ENCODE measurements at regions of chr2 and their contacts with region 1.

Region 1: DNA sequence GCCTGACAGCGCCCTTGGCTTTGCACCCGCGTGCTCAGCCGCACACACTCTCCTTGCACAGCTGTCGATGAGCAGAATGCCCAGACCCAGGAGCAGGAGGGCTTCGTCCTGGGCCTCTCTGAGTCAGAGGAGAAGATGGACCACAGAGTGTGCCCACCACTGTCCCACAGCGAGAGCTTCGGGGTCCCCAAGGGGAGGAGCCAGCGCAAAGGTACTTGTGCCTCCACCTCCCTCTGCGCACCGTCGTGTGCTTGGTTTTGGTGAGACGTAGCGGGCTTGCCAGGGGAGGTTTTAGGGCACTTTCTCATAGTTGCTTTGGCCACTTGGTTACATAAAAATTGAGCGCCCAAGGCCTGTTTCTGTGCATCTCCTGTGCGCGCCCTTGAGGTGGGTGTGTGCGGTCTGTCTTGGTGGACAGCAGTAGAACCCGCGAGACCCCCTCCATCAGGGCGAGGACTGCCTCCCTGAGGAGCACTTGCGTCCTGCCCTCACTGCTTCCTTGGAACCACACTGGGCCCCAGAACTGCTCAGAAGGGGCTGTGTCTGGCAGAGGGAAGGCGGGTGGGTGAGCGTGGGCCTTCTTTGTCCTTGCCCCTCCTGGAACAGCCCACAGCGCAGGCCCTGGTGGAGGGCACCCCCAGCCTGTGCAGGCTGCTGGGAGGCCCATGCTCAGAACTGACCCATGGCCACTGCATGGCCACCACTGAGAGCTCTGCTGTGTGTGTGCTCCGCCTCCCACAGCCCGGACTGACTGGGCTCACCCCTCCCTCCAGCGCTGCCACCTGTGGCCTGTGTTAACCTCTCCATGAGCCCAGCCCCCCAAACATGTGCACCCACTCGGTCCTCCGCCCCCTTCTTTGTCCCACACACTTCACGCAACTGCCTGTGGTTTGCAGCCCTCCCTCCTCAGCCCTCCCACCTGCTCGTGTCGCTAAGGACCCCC is 95.9 kb downstream of the DGKD start:
- DNase-seq: no peak
- H3K4me3 ChIP-seq: no peak overlapping the region
- H3K27ac ChIP-seq: no peak overlapping the region
- H3K4me1 ChIP-seq: no peaks in the 10 kb centered on the region
- H3K27me3 ChIP-seq: no peaks in the 10 kb centered on the region

Region 2: GRCh38 chr2:233129351-233129987 is 320.7 kb before region 1 on chr2:
- in situ Hi-C with region 1: no loop called
- DNase-seq: no peak
- H3K4me3 ChIP-seq: no peak overlapping the region
- H3K27ac ChIP-seq: no peak overlapping the region
- H3K4me1 ChIP-seq: no peaks in the 10 kb centered on the region
- H3K27me3 ChIP-seq: peaks cover 36% of the 10 kb centered on the region

Region 3: GRCh38 chr2:233711312-233712008 is 261.3 kb after region 1 on chr2:
- in situ Hi-C with region 1: loop called (anchors 10 kb)
- DNase-seq: peak; percentile 88
- H3K4me3 ChIP-seq: no peak overlapping the region
- H3K27ac ChIP-seq: no peak overlapping the region
- H3K4me1 ChIP-seq: peaks cover 8% of the 10 kb centered on the region; the same call in 1 of the 2 replicates
- H3K27me3 ChIP-seq: peaks cover 61% of the 10 kb centered on the region

Region 4: GRCh38 chr2:234130777-234131181 is 680.6 kb after region 1 on chr2:
- in situ Hi-C with region 1: no loop called
- DNase-seq: no peak
- H3K4me3 ChIP-seq: no peak overlapping the region
- H3K27ac ChIP-seq: no peak overlapping the region
- H3K4me1 ChIP-seq: no peaks in the 10 kb centered on the region
- H3K27me3 ChIP-seq: no peaks in the 10 kb centered on the region

Region 5: GRCh38 chr2:234288974-234289455 is 838.8 kb after region 1 on chr2:
- in situ Hi-C with region 1: no loop called
- DNase-seq: peak; percentile 59
- H3K4me3 ChIP-seq: no peak overlapping the region
- H3K27ac ChIP-seq: no peak overlapping the region
- H3K4me1 ChIP-seq: peaks cover 20% of the 10 kb centered on the region; the same call in 1 of the 2 replicates
- H3K27me3 ChIP-seq: no peaks in the 10 kb centered on the region